PC-9 (cell line): ENCODE measurements at regions of chr11 and their contacts with region 1.

Region 1: DNA sequence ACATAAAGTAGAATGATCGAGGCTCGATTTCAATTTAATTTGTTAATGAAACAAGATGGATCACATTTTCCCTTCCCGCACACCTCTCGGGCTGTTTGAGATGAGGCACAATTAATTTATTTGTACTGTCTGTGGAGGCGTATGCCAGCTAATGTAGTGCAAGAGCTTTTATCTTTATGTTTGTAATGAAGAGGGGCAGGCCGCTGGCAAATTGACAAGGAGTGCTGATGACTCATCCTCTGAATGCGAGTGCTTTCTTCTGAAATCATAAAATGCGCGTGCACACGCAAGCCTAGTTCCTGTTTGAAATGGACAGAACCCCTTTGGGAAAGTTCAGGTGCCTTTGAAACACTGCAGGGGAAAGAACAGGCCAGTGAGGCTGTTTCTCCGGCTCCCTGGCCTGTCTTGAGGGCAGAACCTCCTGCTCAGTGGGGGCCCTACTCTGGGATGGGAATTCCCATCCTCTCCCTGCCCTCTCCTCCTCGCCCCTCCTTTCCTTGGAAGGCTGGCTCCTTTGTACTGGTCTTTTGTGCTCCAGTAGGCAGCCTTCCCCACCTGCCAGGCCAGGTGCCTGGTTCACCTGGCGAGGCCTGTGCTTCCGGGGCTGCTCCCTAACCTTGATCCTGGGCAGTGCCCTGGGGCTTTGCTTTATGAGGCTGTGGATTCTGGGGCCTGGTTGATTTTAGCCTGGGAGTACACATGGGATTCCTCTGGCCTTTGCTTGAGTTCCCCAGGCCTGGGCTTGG is 50.3 kb downstream of the TEAD1 start:
- DNase-seq: peak; percentile 73 to 88
- H3K4me3 ChIP-seq: peak overlapping the region; percentile 50; the same call in 1 of the 2 replicates
- H3K27ac ChIP-seq: peak overlapping the region; percentile 98
- H3K4me1 ChIP-seq: peaks cover 83% of the 10 kb centered on the region
- H3K27me3 ChIP-seq: no peaks in the 10 kb centered on the region
- CTCF ChIP-seq: no peak

Region 2: DNA sequence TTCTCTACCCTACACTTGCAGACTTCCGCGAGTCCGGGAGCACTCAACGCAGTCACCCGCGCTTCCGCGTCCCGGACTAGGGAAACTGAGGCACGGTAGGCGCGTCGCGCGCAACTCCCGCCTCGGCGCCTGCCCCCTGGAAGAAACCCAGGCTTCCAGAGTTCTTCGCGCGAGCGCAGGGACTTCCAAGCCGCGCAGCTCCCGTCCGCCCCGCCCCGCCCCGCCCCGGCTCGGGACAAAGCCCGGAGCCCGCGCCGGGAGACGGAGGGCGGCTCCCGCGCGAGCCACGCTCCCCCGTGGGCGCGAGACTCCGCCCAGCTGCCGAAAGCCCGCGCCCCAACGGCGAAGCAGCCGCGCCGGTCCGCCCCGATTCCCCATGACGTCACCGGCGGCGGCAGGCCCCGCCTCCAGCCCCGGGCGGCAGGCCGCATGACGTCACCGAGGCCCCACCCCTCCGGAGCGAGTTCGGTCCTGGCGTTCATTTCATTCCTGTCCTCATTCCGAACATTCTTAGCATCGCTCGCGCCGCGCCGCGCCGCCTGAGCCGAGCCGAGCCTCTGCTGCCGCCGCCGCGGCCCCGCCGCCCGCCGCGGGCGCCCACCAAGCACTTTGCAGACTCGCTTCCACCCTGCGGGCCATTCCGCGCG is 50.4 kb before region 1 on chr11 and contains the start of gene TEAD1:
- CTCF ChIA-PET with region 1: no interaction called
- POLR2A ChIA-PET with region 1: interaction called, 4 read pairs
- intact Hi-C with region 1: loop called (anchors 1 kb)
- DNase-seq: peak; percentile 71 to 97
- H3K4me3 ChIP-seq: peak within 1 kb of the TSS; percentile 94
- H3K27ac ChIP-seq: peak within 1 kb of the TSS; percentile 71
- H3K4me1 ChIP-seq: peaks cover 32% of the 10 kb centered on the region
- H3K27me3 ChIP-seq: no peaks in the 10 kb centered on the region
- CTCF ChIP-seq: no peak
- total RNA-seq, gene TEAD1: 76.9 and 106 TPM in 2 replicates

Region 3: GRCh38 chr11:12693479-12694181 is 30.8 kb before region 1 on chr11:
- CTCF ChIA-PET with region 1: no interaction called
- POLR2A ChIA-PET with region 1: no interaction called
- intact Hi-C with region 1: loop called (anchors 2 kb)
- DNase-seq: peak; percentile 44 to 92
- H3K4me3 ChIP-seq: peak overlapping the region; percentile 49
- H3K27ac ChIP-seq: peak overlapping the region; percentile 99
- H3K4me1 ChIP-seq: peaks cover 96% of the 10 kb centered on the region
- H3K27me3 ChIP-seq: no peaks in the 10 kb centered on the region
- CTCF ChIP-seq: no peak

Region 4: DNA sequence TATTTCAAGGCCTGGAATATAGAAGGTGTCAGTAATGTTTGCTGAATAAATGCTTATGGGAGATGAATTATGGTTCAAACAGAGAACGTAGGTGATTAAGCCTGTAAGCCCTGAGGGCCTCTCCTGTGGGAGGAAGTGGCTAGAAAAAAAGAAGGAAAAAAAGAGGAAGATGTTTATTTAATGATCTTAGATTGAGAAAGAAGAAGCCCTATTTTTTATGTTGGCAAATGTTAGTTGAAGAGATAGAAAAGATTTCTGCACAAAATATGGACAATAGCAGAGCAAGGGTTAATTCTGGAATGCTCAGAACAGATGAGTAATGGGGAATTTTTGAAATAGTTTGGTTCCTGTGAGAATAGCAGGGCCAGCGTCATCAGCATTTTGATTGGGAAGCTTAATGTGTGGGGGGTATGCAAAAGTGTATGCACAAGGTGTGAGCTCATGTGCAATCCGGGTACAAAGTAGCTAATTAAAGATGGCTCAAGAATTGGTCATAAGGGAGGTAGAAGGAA is 45.4 kb after region 1 on chr11:
- CTCF ChIA-PET with region 1: no interaction called
- POLR2A ChIA-PET with region 1: no interaction called
- intact Hi-C with region 1: loop called (anchors 2 kb)
- DNase-seq: peak; percentile 31 to 94
- H3K4me3 ChIP-seq: no peak overlapping the region
- H3K27ac ChIP-seq: peak overlapping the region; percentile 88
- H3K4me1 ChIP-seq: peaks cover 46% of the 10 kb centered on the region
- H3K27me3 ChIP-seq: no peaks in the 10 kb centered on the region
- CTCF ChIP-seq: no peak

Region 5: GRCh38 chr11:12888525-12889158 is 164.2 kb after region 1 on chr11:
- CTCF ChIA-PET with region 1: interaction called, 3 read pairs
- POLR2A ChIA-PET with region 1: no interaction called
- intact Hi-C with region 1: loop called (anchors 5 kb)
- DNase-seq: peak; percentile 41 to 60
- H3K4me3 ChIP-seq: no peak overlapping the region
- H3K27ac ChIP-seq: no peak overlapping the region
- H3K4me1 ChIP-seq: no peaks in the 10 kb centered on the region; the same call in 1 of the 2 replicates
- H3K27me3 ChIP-seq: no peaks in the 10 kb centered on the region
- CTCF ChIP-seq: peak; percentile 76